ENCODE measurements at regions of chr12 and their contacts with region 1.

Region 1: DNA sequence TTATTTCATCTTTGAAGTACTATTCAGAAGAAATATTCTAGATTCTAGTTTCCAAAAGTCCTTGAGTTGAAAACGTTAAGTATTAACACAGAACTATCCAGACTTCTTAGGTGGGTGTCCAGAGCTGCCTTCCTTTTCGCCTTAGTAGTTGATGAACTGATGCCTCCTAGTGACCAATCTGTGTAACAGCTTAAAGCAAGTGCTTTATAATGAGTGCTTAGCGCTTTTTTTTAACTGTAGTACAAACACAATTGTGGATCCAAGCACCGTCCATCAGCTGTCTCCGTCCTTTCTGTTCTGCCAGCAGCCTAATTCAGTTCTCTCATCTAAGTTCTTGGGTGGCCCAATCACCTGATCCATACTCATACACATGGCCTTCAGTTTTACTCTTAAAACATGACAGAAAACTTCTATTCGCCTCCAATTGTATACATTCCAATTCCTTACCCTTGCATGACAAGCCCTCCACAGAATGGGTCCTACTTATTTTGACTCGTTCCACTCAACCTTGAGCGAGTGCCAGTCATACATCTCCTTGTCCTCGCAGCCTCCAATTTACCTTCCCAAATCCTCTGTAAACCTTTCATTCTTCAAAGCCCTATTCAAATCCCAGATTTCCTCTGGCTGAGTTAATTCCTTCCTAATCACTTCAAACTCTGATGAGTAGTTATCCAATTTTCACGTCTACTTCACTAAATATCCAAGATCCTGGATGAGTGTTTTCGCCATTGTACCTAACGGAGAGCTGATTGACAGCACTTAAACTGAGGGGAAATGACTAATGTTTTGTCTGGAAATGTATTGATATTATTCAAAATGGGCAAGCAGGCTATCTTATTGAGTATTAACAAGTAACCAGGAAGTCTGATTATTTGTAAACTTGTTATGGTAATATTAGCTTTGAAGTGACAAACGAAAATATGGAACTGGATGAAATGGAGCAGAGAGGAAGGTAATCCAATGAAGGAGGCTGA is 5.8 kb upstream of the PHLDA1 start:
- DNase-seq: peak; percentile 34
- ATAC-seq: peak; percentile 68
- H3K4me3 ChIP-seq: no peak overlapping the region
- H3K27ac ChIP-seq: no peak overlapping the region
- H3K4me1 ChIP-seq: peaks cover 5% of the 10 kb centered on the region
- H3K27me3 ChIP-seq: no peaks in the 10 kb centered on the region
- CTCF ChIP-seq: peak; percentile 74 to 84 (median 81)
- EP300 ChIP-seq: no peak
- POLR2A ChIP-seq: no peak
- RAD21 ChIP-seq: peak; percentile 96

Region 2: DNA sequence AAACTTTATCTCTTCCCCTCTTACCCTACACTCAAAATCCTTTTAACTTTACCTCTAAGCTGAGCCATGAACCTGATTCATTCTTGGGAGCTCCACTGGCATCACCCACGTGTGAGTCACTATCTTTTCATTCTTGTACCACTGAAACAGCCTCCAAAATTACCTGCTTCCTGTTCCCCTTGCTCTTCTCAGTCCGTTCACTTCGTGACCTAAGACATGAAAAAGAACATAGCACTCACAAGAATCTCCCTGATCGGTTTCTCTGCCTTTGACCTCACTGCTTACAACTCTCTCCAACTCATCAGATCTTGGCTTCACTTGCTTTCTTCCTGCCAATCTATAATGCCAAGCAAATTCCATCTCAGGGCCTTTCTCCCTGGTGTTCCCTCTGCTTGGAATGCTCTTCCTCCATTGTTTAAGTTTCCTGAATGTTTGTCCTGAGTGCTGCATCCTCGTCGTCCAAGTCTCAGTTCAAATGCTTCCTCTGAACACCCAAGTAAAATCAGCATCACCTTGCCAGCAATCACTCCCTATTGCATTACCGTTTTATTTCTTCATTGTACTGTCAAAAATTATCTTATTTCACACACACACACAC is 547.7 kb before region 1 on chr12:
- CTCF ChIA-PET with region 1: interaction called, 43 read pairs
- POLR2A ChIA-PET with region 1: interaction called, 5 read pairs
- RAD21 ChIA-PET with region 1: interaction called, 63 read pairs
- SMC1A ChIA-PET with region 1: interaction called, 50 read pairs
- in situ Hi-C with region 1: no loop called
- intact Hi-C with region 1: no loop called
- DNase-seq: no peak
- ATAC-seq: peak; percentile 76
- H3K4me3 ChIP-seq: no peak overlapping the region; the same call in 1 of the 2 replicates
- H3K27ac ChIP-seq: no peak overlapping the region
- H3K4me1 ChIP-seq: no peaks in the 10 kb centered on the region
- H3K27me3 ChIP-seq: no peaks in the 10 kb centered on the region
- CTCF ChIP-seq: no peak
- EP300 ChIP-seq: no peak
- POLR2A ChIP-seq: no peak
- RAD21 ChIP-seq: no peak

Region 3: DNA sequence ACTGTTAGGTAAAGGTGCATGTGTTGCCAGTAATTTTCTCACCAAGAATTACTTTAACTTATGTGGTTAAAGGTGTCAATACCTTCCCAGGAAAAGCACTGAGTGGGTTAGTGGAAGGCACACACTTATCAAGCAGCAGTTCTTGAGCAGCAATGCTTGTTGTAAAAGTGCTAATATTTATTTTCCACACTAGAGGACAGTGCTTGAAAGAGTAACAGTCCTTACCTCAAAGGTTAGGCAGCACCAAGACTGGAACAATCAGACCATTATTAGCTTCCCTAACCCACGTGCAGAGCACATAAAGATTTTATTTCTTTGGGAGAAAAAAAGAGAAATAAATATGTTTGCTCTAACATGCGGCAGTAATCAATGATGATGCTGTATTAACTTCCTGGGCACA is 477.2 kb before region 1 on chr12:
- CTCF ChIA-PET with region 1: interaction called, 34 read pairs
- POLR2A ChIA-PET with region 1: interaction called, 3 read pairs
- RAD21 ChIA-PET with region 1: interaction called, 89 read pairs
- SMC1A ChIA-PET with region 1: interaction called, 94 read pairs
- in situ Hi-C with region 1: no loop called
- intact Hi-C with region 1: loop called (anchors 1 kb)
- DNase-seq: no peak
- ATAC-seq: peak; percentile 88
- H3K4me3 ChIP-seq: no peak overlapping the region
- H3K27ac ChIP-seq: no peak overlapping the region
- H3K4me1 ChIP-seq: no peaks in the 10 kb centered on the region
- H3K27me3 ChIP-seq: no peaks in the 10 kb centered on the region
- CTCF ChIP-seq: peak; percentile 27 to 63 (median 31); a peak in 4 of 6 replicates
- EP300 ChIP-seq: no peak
- POLR2A ChIP-seq: no peak
- RAD21 ChIP-seq: peak; percentile 84

Region 4: DNA sequence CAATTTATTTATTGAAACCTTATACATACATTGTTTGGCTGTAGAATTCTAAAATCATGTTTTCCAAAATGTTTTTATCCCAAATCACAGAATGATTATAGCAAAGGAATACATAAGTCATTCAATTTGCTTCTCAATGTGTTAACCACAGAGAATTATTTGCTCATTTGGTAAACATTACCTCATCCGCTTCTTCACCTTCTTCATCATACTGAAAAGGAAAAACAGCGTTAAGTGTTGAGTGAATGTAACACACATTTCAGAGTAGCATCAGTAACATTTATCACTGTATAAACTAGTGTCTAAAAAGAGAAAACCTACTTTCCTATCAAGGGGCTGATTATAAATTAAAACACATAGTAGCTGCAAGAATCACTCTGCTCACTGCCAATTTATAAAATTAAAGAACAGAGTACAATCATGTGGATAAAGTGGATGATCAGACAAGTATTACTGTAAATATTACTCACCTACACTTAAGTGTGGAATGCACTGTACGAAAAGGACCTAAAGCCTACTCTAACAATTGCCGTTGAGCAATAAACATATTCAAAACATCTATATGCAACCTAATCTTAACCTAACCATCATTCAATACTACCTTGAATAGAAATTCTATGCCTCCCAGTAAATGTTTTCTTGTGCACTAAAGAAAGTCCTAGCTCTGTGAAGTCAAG is 12.3 kb after region 1 on chr12:
- CTCF ChIA-PET with region 1: interaction called, 8 read pairs
- POLR2A ChIA-PET with region 1: interaction called, 3 read pairs
- RAD21 ChIA-PET with region 1: interaction called, 5 read pairs
- SMC1A ChIA-PET with region 1: interaction called, 12 read pairs
- in situ Hi-C with region 1: no loop called
- intact Hi-C with region 1: no loop called
- DNase-seq: no peak
- ATAC-seq: no peak
- H3K4me3 ChIP-seq: no peak overlapping the region
- H3K27ac ChIP-seq: no peak overlapping the region
- H3K4me1 ChIP-seq: no peaks in the 10 kb centered on the region
- H3K27me3 ChIP-seq: no peaks in the 10 kb centered on the region
- CTCF ChIP-seq: no peak
- EP300 ChIP-seq: no peak
- POLR2A ChIP-seq: no peak
- RAD21 ChIP-seq: no peak

Region 5: GRCh38 chr12:76455582-76456345 is 418.3 kb after region 1 on chr12:
- CTCF ChIA-PET with region 1: interaction called, 5 read pairs
- POLR2A ChIA-PET with region 1: no interaction called
- RAD21 ChIA-PET with region 1: interaction called, 11 read pairs
- SMC1A ChIA-PET with region 1: interaction called, 11 read pairs
- in situ Hi-C with region 1: no loop called
- intact Hi-C with region 1: no loop called
- DNase-seq: peak; percentile 33
- ATAC-seq: peak; percentile 99
- H3K4me3 ChIP-seq: no peak overlapping the region
- H3K27ac ChIP-seq: no peak overlapping the region
- H3K4me1 ChIP-seq: no peaks in the 10 kb centered on the region
- H3K27me3 ChIP-seq: no peaks in the 10 kb centered on the region
- CTCF ChIP-seq: peak; percentile 54 to 73 (median 71); a peak in 5 of 6 replicates
- EP300 ChIP-seq: no peak
- POLR2A ChIP-seq: no peak
- RAD21 ChIP-seq: peak; percentile 89

Measured in GM12878 (cell line).